Activated CD4-positive, alpha-beta T cell treated with anti-CD3 and anti-CD28 coated beads for 36 hours (primary cell): ENCODE measurements at regions of chr17 and their contacts with region 1.

Region 1: GRCh38 chr17:7484067-7484918 is at the start of gene POLR2A:
- DNase-seq: peak; percentile 98
- ATAC-seq: peak; percentile 71
- H3K4me3 Mint-ChIP-seq: peak within 1 kb of the TSS; percentile 99
- H3K27ac Mint-ChIP-seq: peak within 1 kb of the TSS; percentile 100
- H3K4me1 Mint-ChIP-seq: peaks cover 71% of the 10 kb centered on the region
- H3K27me3 Mint-ChIP-seq: no peaks in the 10 kb centered on the region
- total RNA-seq, gene POLR2A: 193 to 203 TPM

Region 2: DNA sequence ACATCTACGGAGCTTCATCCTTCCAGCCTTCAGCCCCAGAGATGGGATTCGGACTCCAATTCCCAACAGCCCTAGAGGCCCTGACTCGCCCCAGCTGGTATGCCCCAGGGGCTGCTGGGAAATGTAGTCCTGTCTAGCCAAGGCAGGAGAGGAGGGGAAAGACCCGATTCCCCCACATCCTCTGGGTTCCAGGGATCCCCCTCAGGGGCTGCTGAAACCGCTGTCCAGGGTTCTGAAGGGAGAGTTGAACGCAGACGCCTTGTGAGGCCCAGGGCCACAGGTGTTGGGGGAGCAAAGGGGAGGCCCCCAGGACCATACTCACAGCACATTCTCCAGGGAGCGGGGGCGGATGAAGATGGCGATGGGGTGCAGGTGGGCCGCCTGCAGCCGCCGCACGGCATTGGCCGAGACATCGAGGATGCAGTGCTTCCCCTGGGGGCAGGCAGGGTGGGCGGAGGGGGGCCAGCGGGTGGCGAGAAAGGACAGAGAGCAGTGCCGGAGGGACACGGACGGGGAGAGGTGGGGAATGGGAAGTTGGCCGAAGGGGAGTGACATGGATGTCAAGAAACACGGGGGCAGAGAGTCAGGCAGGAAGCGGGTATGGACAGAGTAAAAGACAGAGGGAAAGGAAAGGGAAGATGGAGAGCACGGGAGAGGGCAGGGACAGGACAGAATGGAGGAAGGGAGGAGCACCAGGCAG is 292.6 kb before region 1 on chr17:
- CTCF ChIA-PET with region 1: no interaction called
- POLR2A ChIA-PET with region 1: no interaction called
- intact Hi-C with region 1: no loop called
- DNase-seq: peak; percentile 61
- ATAC-seq: peak; percentile 72
- H3K4me3 Mint-ChIP-seq: no peak overlapping the region
- H3K27ac Mint-ChIP-seq: no peak overlapping the region
- H3K4me1 Mint-ChIP-seq: no peaks in the 10 kb centered on the region
- H3K27me3 Mint-ChIP-seq: no peaks in the 10 kb centered on the region

Region 3: DNA sequence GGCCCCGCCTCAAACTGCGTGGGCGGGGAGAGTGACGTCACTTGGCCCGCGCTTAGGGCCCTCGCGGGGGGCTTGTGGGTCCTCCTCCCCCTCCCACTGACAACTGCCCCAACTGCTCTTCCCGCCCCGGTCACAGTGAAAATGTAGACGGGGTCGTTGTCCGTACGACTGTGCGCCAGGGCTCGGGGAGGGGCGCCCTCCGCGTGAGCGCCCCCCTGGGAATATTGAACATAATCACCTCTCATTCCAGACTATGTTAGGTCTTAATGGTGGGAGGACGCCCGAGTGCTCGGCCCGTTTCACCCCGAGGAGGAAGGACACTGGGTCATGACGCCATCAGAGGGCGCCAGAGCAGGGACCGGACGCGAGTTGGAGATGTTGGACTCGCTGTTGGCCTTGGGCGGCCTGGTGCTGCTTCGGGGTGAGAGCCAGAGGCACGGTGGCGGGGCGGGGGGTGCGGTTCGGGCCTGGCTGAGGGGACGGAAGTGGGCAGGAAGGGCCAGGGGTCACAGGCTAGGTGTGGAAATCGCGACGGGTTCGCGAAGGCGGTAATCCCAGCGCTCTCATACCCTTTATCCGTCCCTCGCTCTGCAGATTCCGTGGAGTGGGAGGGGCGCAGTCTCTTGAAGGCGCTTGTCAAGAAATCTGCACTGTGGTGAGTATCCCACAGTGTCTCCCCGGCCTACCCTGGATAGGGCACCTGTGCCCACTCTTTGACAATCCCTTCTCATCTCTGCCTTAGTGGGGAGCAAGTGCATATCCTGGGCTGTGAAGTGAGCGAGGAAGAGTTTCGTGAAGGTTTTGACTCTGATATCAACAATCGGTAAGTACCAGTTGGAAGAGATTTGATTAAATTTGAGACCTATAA is 231.9 kb before region 1 on chr17 and contains the start of gene ELP5:
- CTCF ChIA-PET with region 1: no interaction called
- POLR2A ChIA-PET with region 1: no interaction called
- intact Hi-C with region 1: loop called (anchors 1 to 5 kb)
- DNase-seq: peak; percentile 94
- ATAC-seq: peak; percentile 65
- H3K4me3 Mint-ChIP-seq: peak within 1 kb of the TSS; percentile 93
- H3K27ac Mint-ChIP-seq: peak within 1 kb of the TSS; percentile 99
- H3K4me1 Mint-ChIP-seq: peaks cover 40% of the 10 kb centered on the region
- H3K27me3 Mint-ChIP-seq: no peaks in the 10 kb centered on the region
- total RNA-seq, gene ELP5: 58.1 to 62.3 TPM

Region 4: GRCh38 chr17:7394452-7395191 is 89.7 kb before region 1 on chr17 and contains the start of gene PLSCR3:
- CTCF ChIA-PET with region 1: no interaction called
- POLR2A ChIA-PET with region 1: interaction called, 3 read pairs
- intact Hi-C with region 1: loop called in 1 of 2 experiments (anchors 1 kb)
- DNase-seq: peak; percentile 90
- ATAC-seq: peak; percentile 86
- H3K4me3 Mint-ChIP-seq: peak within 1 kb of the TSS; percentile 88
- H3K27ac Mint-ChIP-seq: peak within 1 kb of the TSS; percentile 95
- H3K4me1 Mint-ChIP-seq: peaks cover 26% of the 10 kb centered on the region
- H3K27me3 Mint-ChIP-seq: no peaks in the 10 kb centered on the region
- total RNA-seq, gene PLSCR3: 69.3 to 78.9 TPM

Region 5: DNA sequence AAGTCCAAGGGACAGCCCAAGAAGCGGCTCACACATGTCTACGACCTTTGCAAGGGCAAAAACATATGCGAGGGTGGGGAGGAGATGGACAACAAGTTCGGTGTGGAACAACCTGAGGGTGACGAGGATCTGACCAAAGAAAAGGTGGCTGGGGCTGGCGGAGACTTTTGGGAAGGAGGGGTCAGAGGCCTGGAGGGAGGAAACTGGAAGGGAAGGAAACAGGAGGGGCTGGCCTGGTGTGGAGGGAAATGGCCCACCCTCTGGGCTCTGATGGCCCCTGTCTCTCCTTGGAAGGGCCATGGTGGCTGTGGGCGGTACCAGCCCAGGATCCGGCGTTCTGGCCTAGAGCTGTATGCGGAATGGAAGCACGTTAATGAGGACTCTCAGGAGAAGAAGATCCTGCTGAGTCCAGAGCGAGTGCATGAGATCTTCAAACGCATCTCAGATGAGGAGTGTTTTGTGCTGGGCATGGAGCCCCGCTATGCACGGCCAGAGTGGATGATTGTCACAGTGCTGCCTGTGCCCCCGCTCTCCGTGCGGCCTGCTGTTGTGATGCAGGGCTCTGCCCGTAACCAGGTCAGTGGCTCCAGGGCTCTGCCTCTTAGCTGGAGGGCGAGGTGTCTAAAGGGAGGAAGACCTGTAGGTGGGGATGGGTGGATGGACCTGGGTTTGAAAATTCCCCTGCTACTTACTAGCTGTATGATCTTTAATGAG is 12.3 kb after region 1 on chr17:
- CTCF ChIA-PET with region 1: interaction called, 10 read pairs
- POLR2A ChIA-PET with region 1: interaction called, 7 read pairs
- intact Hi-C with region 1: no loop called
- DNase-seq: no peak
- ATAC-seq: no peak
- H3K4me3 Mint-ChIP-seq: no peak overlapping the region
- H3K27ac Mint-ChIP-seq: no peak overlapping the region
- H3K4me1 Mint-ChIP-seq: peaks cover 26% of the 10 kb centered on the region
- H3K27me3 Mint-ChIP-seq: no peaks in the 10 kb centered on the region

Region 6: DNA sequence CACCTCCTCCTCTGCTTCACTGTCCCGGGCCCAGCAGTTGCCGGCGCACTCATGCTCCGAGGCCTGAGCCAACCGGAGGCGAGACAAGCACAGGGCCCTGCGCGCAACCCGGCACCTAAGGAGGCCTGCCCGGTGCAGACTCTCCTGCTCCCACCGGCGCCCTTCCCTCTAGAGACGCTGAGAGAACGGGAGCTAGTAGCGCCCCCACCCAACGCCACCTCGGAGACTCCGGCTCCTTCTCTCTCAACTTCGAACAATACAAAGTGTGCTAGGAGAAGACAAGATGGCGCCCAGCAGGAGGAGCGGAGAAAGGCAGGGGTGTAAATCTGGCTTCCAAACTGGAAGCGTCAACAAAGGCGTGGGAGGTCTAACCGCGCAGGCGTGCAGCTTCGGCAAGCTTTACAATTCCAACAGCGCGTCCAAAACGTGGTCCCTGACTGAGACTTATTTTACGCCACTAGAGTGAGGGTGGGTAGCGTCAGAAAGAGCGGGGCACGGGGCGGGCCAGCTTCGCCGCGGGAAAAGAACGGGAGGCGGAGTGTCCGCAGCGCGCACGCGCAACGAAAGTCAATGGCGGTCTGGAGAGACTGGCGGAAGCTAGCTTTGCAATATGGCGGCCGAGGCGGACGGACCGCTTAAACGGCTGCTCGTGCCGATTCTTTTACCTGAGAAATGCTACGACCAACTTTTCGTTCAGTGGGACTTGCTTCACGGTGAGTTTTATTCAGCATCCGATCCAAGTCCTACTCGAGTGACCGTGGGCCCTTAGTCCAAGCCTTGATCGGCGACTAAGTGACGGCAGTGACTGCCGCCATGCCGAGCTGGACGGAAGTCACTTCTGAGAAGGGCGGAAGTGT is 99.2 kb after region 1 on chr17 and contains the start of gene MPDU1:
- CTCF ChIA-PET with region 1: no interaction called
- POLR2A ChIA-PET with region 1: interaction called, 11 read pairs
- intact Hi-C with region 1: loop called in 1 of 2 experiments (anchors 1 kb)
- DNase-seq: peak; percentile 98
- ATAC-seq: peak; percentile 77
- H3K4me3 Mint-ChIP-seq: peak within 1 kb of the TSS; percentile 82
- H3K27ac Mint-ChIP-seq: peak within 1 kb of the TSS; percentile 100
- H3K4me1 Mint-ChIP-seq: peaks cover 56% of the 10 kb centered on the region
- H3K27me3 Mint-ChIP-seq: no peaks in the 10 kb centered on the region
- total RNA-seq, gene MPDU1: 51.7 to 77.0 TPM

Region 7: GRCh38 chr17:7887482-7888183 is 403.3 kb after region 1 on chr17:
- CTCF ChIA-PET with region 1: no interaction called
- POLR2A ChIA-PET with region 1: no interaction called
- intact Hi-C with region 1: loop called in 1 of 2 experiments (anchors 1 kb)
- DNase-seq: peak; percentile 94
- ATAC-seq: peak; percentile 79
- H3K4me3 Mint-ChIP-seq: no peak overlapping the region
- H3K27ac Mint-ChIP-seq: no peak overlapping the region
- H3K4me1 Mint-ChIP-seq: peaks cover 4% of the 10 kb centered on the region
- H3K27me3 Mint-ChIP-seq: no peaks in the 10 kb centered on the region